Mammary epithelial cell (primary cell): ENCODE measurements at regions of chr9 and their contacts with region 1.

Region 1: GRCh38 chr9:14271093-14271673 is 42.8 kb downstream of the NFIB start:
- DNase-seq: peak; percentile 58
- H3K4me3 ChIP-seq: no peak overlapping the region
- H3K27ac ChIP-seq: peak overlapping the region; percentile 3
- H3K4me1 ChIP-seq: peaks cover 21% of the 10 kb centered on the region
- H3K27me3 ChIP-seq: no peaks in the 10 kb centered on the region
- CTCF ChIP-seq: no peak

Region 2: DNA sequence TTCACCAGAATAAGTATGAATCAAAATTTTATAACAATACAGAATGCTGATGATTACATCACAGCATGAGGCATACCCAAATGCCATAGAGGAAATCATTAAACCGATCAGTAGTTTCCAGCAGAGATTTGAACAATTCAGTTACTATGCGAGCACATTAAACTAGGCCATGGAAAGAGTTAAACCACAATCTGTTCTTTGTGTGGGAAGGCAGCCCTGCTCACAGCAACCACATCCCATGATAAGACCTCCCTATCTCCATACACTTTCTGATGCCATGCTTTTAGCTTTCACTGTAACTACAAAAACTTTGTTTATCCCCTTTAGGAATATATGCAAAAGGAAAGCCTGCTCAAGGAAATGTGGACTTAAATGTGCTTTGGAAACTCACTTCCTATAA is 38.2 kb after region 1 on chr9:
- CTCF ChIA-PET with region 1: no interaction called
- dilution Hi-C with region 1: loop called (anchors 5 kb)
- in situ Hi-C with region 1: no loop called
- intact Hi-C with region 1: loop called (anchors 2 kb)
- DNase-seq: peak; percentile 93
- H3K4me3 ChIP-seq: peak overlapping the region; percentile 39 to 98 (median 95)
- H3K27ac ChIP-seq: peak overlapping the region; percentile 95
- H3K4me1 ChIP-seq: peaks cover 34% of the 10 kb centered on the region
- H3K27me3 ChIP-seq: no peaks in the 10 kb centered on the region
- CTCF ChIP-seq: no peak

Region 3: GRCh38 chr9:14372437-14373335 is 101.5 kb after region 1 on chr9:
- CTCF ChIA-PET with region 1: no interaction called
- dilution Hi-C with region 1: loop called (anchors 5 kb)
- in situ Hi-C with region 1: no loop called
- intact Hi-C with region 1: no loop called
- DNase-seq: peak; percentile 80
- H3K4me3 ChIP-seq: no peak overlapping the region
- H3K27ac ChIP-seq: peak overlapping the region; percentile 47
- H3K4me1 ChIP-seq: peaks cover 26% of the 10 kb centered on the region
- H3K27me3 ChIP-seq: no peaks in the 10 kb centered on the region
- CTCF ChIP-seq: no peak

Region 4: DNA sequence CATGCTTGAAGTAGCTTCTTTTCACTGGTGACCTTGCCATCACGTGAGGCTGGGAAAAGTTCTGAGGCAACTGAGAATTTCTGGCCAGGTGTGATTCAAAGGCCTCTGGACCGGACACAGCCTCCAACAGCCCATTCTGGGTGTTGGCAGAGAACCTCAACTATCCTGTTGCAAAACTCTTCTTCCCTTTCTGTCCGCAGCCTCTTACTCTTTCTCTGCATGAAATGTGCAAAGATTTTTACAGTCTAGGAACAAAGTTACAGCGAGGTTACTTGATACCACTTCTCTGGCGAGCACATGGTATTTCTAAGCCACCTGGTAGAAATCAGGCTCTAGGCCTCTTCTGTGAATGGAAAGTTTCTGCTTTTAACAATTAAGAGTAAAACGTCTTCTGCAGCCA is 559.9 kb after region 1 on chr9:
- CTCF ChIA-PET with region 1: no interaction called
- dilution Hi-C with region 1: no loop called
- in situ Hi-C with region 1: no loop called
- intact Hi-C with region 1: no loop called
- DNase-seq: no peak
- H3K4me3 ChIP-seq: no peak overlapping the region
- H3K27ac ChIP-seq: no peak overlapping the region
- H3K4me1 ChIP-seq: no peaks in the 10 kb centered on the region
- H3K27me3 ChIP-seq: no peaks in the 10 kb centered on the region
- CTCF ChIP-seq: no peak